ENCODE measurements at regions of chr7 and their contacts with region 1.

Region 1: DNA sequence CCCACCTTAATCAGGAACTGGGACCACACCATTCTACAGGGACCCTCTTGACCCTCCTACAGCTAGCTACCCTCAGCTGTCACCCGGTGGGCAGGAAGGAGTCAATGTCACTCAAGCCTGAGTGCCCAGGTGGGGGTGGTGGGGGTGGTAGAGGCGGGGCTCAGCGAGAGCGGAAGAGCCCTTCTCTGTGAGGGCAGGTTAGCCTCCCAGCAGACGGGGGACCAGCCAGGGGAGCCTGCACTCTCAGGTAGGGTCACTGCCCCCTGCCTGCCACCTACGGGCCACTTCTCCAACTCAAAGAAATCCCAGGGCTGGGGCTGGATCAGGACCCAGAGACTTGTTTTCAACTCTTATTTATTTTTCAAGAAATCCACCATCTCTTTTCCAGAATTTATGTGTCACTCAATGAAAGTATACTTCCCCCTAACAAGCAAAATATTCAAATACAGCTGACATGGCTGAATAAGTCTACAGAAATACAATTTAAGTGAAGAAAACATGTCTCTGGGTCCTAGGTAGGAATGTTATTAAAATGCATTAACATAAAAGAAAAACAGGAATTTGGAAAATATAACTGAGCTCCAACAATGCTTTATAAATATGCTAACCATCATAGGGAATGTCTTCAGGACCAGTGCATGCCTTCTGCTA is 63.4 kb upstream of the DDC start:
- DNase-seq: peak in 1 of 2 donors; percentile 59
- ATAC-seq: peak; percentile 29 to 51 (median 42)
- H3K4me3 ChIP-seq: peak overlapping the region; percentile 35
- H3K27ac ChIP-seq: peak overlapping the region; percentile 84
- H3K4me1 ChIP-seq: peaks cover 48% of the 10 kb centered on the region
- H3K27me3 ChIP-seq: no peaks in the 10 kb centered on the region
- CTCF ChIP-seq: peak; percentile 6

Region 2: GRCh38 chr7:50217821-50218281 is 410.7 kb before region 1 on chr7:
- intact Hi-C with region 1: no loop called
- DNase-seq: no peak
- ATAC-seq: no peak
- H3K4me3 ChIP-seq: no peak overlapping the region
- H3K27ac ChIP-seq: no peak overlapping the region
- H3K4me1 ChIP-seq: no peaks in the 10 kb centered on the region
- H3K27me3 ChIP-seq: no peaks in the 10 kb centered on the region
- CTCF ChIP-seq: no peak

Region 3: DNA sequence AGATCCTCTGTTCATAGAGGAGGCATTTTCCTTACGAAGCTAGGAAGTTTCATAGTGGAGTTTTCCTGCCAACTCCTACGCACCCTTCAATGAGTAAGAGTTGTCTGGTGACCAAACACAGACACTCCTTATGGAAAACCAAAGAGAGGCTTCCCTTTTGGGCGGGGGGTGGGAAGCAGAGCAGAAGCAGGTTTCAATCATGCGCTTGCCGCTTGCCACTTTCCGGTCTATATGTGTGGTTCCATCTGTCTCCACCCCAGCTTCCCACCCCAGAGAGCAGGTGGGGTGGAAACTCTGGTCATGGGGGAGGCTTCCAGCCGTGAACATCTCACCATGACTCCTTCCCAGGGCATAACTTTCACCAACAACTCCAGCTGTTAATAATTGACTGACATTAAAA is 222.9 kb after region 1 on chr7:
- intact Hi-C with region 1: no loop called
- DNase-seq: no peak
- ATAC-seq: no peak
- H3K4me3 ChIP-seq: no peak overlapping the region
- H3K27ac ChIP-seq: no peak overlapping the region
- H3K4me1 ChIP-seq: no peaks in the 10 kb centered on the region
- H3K27me3 ChIP-seq: no peaks in the 10 kb centered on the region
- CTCF ChIP-seq: no peak

Region 4: DNA sequence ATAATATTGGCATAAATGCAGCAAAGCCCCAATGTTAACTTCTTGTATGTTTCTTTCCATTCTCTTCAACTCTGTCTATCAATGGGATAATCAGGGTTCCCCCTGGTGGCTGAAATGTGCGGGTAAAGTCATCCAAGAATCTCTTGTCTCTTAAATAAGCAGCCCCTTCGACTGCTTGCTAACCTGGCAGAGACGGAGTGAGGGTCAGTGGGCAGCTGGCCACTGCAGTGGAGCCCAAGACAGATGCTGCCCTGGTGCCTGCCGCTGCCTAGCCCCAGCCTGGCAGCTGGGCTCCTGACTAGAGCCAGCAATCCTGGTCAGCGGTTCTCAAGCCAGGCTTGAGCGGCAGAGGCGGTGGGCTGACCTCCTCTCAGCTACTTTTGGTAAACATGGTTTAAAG is 439.2 kb after region 1 on chr7:
- intact Hi-C with region 1: loop called in 1 of 2 experiments (anchors 10 kb)
- DNase-seq: peak in 1 of 2 donors; percentile 43
- ATAC-seq: peak; percentile 53 to 81 (median 64)
- H3K4me3 ChIP-seq: no peak overlapping the region
- H3K27ac ChIP-seq: no peak overlapping the region
- H3K4me1 ChIP-seq: peaks cover 7% of the 10 kb centered on the region
- H3K27me3 ChIP-seq: no peaks in the 10 kb centered on the region
- CTCF ChIP-seq: peak; percentile 78

Measured in psoas muscle (tissue), 8 donors.